ENCODE measurements at regions of chr9 and their contacts with region 1.

Region 1: GRCh38 chr9:33816327-33817252 is at the start of gene UBE2R2:
- DNase-seq: peak; percentile 84
- ATAC-seq: peak; percentile 75
- H3K4me3 ChIP-seq: peak within 1 kb of the TSS; percentile 87 to 89
- H3K27ac ChIP-seq: peak within 1 kb of the TSS; percentile 99
- H3K4me1 ChIP-seq: peaks cover 28 to 54% of the 10 kb centered on the region in 2 experiments
- H3K27me3 ChIP-seq: no peaks in the 10 kb centered on the region
- CTCF ChIP-seq: no peak
- POLR2A ChIP-seq: peak; percentile 64
- RAD21 ChIP-seq: no peak
- total RNA-seq, gene UBE2R2: 47.0 TPM

Region 2: GRCh38 chr9:33404788-33405362 is 411.7 kb before region 1 on chr9:
- CTCF ChIA-PET with region 1: no interaction called
- POLR2A ChIA-PET with region 1: no interaction called
- RAD21 ChIA-PET with region 1: no interaction called
- intact Hi-C with region 1: no loop called
- DNase-seq: no peak
- ATAC-seq: 0 out of 2 replicates have a peak, but pooled peaks have one; percentile 14
- H3K4me3 ChIP-seq: no peak overlapping the region
- H3K27ac ChIP-seq: no peak overlapping the region
- H3K4me1 ChIP-seq: peaks cover 0 to 3% of the 10 kb centered on the region in 2 experiments; a peak in 1 of 4 replicates
- H3K27me3 ChIP-seq: no peaks in the 10 kb centered on the region
- CTCF ChIP-seq: no peak
- POLR2A ChIP-seq: no peak
- RAD21 ChIP-seq: no peak

Region 3: GRCh38 chr9:33489066-33489465 is 327.5 kb before region 1 on chr9:
- CTCF ChIA-PET with region 1: no interaction called
- POLR2A ChIA-PET with region 1: no interaction called
- RAD21 ChIA-PET with region 1: no interaction called
- intact Hi-C with region 1: no loop called
- DNase-seq: no peak
- ATAC-seq: no peak
- H3K4me3 ChIP-seq: no peak overlapping the region
- H3K27ac ChIP-seq: no peak overlapping the region
- H3K4me1 ChIP-seq: no peaks in the 10 kb centered on the region
- H3K27me3 ChIP-seq: no peaks in the 10 kb centered on the region
- CTCF ChIP-seq: no peak
- POLR2A ChIP-seq: no peak
- RAD21 ChIP-seq: no peak

Region 4: GRCh38 chr9:33778700-33779351 is 37.8 kb before region 1 on chr9:
- CTCF ChIA-PET with region 1: interaction called, 13 read pairs
- POLR2A ChIA-PET with region 1: no interaction called
- RAD21 ChIA-PET with region 1: interaction called in 1 of 2 experiments, 3 read pairs
- intact Hi-C with region 1: no loop called
- DNase-seq: peak; percentile 58
- ATAC-seq: peak; percentile 86
- H3K4me3 ChIP-seq: no peak overlapping the region
- H3K27ac ChIP-seq: no peak overlapping the region
- H3K4me1 ChIP-seq: peaks cover 2 to 25% of the 10 kb centered on the region in 2 experiments; a peak in 2 of 4 replicates
- H3K27me3 ChIP-seq: no peaks in the 10 kb centered on the region
- CTCF ChIP-seq: peak; percentile 78 to 90 (median 83)
- POLR2A ChIP-seq: no peak
- RAD21 ChIP-seq: peak; percentile 86

Region 5: GRCh38 chr9:33852216-33852826 is 35.7 kb after region 1 on chr9:
- CTCF ChIA-PET with region 1: interaction called, 17 read pairs
- POLR2A ChIA-PET with region 1: interaction called, 3 read pairs
- RAD21 ChIA-PET with region 1: interaction called, 3 to 8 read pairs
- intact Hi-C with region 1: loop called (anchors 2 kb)
- DNase-seq: peak; percentile 43
- ATAC-seq: peak; percentile 88
- H3K4me3 ChIP-seq: no peak overlapping the region
- H3K27ac ChIP-seq: no peak overlapping the region
- H3K4me1 ChIP-seq: peaks cover 1 to 23% of the 10 kb centered on the region in 2 experiments; a peak in 3 of 4 replicates
- H3K27me3 ChIP-seq: no peaks in the 10 kb centered on the region
- CTCF ChIP-seq: peak; percentile 62 to 81 (median 71)
- POLR2A ChIP-seq: no peak
- RAD21 ChIP-seq: peak; percentile 82

Region 6: DNA sequence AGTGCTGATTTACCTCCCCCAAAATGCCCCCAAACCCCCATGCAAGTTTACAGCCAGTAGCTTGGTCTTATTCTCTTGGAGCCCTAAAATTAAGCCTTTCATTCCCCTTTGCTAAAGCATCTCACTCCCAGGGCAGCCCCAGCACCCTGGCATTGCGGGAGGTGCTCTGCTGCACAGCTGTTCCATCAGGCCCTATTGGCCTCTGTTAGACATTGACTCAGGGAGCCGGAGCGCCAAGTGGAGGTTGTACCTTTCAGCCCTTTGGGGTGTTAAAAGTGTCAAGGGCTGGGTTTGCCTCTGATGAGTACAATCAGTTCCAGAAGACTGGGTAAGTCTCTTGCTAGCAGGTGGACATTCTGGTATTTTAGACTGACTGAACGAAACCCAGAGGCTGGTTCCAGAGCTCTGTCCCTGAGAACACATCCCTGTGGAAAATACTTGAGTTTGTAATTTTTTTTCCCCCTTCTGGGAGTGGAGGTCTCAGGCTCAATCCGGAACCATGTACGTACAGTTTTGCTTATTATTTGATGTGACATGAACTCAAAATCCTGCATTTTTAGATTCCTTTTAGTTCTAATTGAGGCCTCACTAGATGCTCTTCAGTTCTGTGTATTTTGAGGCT is 102.8 kb after region 1 on chr9:
- CTCF ChIA-PET with region 1: interaction called, 3 read pairs
- POLR2A ChIA-PET with region 1: no interaction called
- RAD21 ChIA-PET with region 1: no interaction called
- intact Hi-C with region 1: loop called (anchors 10 kb)
- DNase-seq: no peak
- ATAC-seq: no peak
- H3K4me3 ChIP-seq: no peak overlapping the region
- H3K27ac ChIP-seq: no peak overlapping the region
- H3K4me1 ChIP-seq: no peaks in the 10 kb centered on the region
- H3K27me3 ChIP-seq: no peaks in the 10 kb centered on the region
- CTCF ChIP-seq: no peak
- POLR2A ChIP-seq: no peak
- RAD21 ChIP-seq: no peak

Region 7: DNA sequence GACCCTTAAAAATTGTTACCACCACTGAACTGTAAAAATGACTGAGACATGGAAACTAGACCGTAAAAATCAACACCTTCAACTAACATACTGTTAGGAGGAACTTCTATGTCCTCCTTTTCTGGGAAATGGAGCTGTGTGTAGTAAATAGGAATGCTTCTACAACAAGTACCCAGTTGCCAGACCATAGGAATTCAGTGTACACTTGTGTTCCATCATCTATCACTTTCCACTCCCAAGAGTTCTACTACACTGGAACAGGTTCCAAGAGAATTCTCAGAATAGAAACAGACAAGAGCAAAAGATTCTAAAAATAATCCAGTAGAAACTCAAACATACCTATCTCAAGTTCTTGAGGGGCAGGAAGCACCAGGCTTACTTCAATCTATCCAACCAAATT is 208.5 kb after region 1 on chr9:
- CTCF ChIA-PET with region 1: interaction called, 4 read pairs
- POLR2A ChIA-PET with region 1: no interaction called
- RAD21 ChIA-PET with region 1: no interaction called
- intact Hi-C with region 1: loop called (anchors 2 kb)
- DNase-seq: no peak
- ATAC-seq: no peak
- H3K4me3 ChIP-seq: no peak overlapping the region
- H3K27ac ChIP-seq: no peak overlapping the region
- H3K4me1 ChIP-seq: 0 out of 4 replicates have a peak, but pooled peaks cover 0 to 2% of the 10 kb centered on the region in 2 experiments
- H3K27me3 ChIP-seq: no peaks in the 10 kb centered on the region
- CTCF ChIP-seq: no peak
- POLR2A ChIP-seq: no peak
- RAD21 ChIP-seq: no peak

Region 8: DNA sequence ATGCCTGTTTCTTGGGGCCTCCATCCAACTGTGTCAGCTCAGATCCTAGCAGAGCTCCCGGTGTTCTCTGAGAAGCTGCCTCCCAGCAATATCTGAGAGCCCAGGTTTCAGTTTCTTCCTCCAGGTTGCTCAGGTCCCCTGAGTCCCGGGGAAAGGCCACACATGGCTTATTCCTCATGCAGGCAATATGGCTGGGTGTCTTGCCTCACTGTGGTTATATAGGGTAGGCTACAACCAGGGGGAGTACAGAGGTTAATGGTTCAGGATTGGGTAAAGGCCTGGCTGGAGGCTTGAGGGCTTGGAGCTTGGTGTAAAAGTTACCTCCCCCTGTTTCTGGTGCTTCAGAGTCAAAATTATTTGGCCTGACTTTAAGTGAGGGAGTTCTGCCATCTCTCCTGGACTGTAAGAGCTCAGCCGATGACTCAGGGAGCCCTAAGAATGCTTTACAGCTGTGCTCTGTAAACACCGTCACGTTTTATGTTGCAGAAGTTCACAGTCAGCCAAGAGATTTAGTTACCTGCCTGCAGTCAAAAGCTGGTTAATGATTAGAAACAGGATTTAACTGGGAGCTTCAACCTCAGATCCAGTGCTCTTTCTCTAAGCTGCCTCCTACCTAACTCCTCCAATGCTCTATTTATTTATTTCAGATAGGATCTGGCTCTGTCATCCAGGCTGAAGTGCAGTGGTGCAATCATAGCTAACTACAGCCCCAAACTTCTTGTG is 256.4 kb after region 1 on chr9:
- CTCF ChIA-PET with region 1: interaction called, 11 read pairs
- POLR2A ChIA-PET with region 1: no interaction called
- RAD21 ChIA-PET with region 1: no interaction called
- intact Hi-C with region 1: loop called (anchors 10 kb)
- DNase-seq: no peak
- ATAC-seq: peak; percentile 9; the same call in 1 of the 2 replicates
- H3K4me3 ChIP-seq: no peak overlapping the region
- H3K27ac ChIP-seq: peak overlapping the region; percentile 53
- H3K4me1 ChIP-seq: peaks cover 17 to 24% of the 10 kb centered on the region in 2 experiments
- H3K27me3 ChIP-seq: no peaks in the 10 kb centered on the region
- CTCF ChIP-seq: no peak
- POLR2A ChIP-seq: no peak
- RAD21 ChIP-seq: no peak